ENCODE measurements at regions of chr12 and their contacts with region 1.

Region 1: DNA sequence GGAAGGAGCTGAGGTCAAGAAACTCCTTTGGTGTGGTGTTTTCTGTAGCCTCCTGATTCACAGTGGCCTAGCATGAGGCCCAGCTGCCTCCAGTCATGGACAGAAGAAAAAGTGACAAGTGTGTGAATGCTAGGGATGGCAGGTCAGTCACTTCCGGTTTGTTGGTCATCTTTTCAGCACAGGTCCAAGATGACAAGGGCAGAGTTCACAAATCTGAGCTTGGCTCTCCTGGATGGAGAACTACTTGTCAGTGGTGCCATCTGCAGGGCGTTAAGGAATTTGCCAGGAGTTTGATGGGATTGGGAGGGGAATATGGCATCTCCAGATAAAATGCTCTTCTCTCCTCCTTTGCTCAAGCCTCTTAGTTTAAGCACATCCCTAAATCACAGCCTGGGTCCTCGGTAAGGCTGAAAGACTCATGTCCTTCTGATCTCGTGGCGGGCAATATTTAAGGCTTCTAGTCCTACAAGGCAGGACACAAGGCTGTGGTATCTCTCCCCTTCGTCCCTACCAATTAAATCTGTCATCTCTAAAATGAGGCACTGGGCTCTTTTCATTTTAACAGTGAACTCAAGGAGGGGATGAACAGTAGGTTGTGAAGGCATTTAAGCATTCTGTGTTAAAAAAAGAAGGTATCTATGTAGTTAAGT is 10.0 kb downstream of the TUBA1B start:
- DNase-seq: no peak
- H3K4me3 ChIP-seq: no peak overlapping the region
- H3K27me3 ChIP-seq: no peaks in the 10 kb centered on the region
- CTCF ChIP-seq: peak; percentile 77

Region 2: GRCh38 chr12:48728807-48729206 is 392.4 kb before region 1 on chr12:
- CTCF ChIA-PET with region 1: no interaction called
- POLR2A ChIA-PET with region 1: no interaction called
- DNase-seq: no peak
- H3K4me3 ChIP-seq: no peak overlapping the region
- H3K27me3 ChIP-seq: no peaks in the 10 kb centered on the region
- CTCF ChIP-seq: no peak

Region 3: DNA sequence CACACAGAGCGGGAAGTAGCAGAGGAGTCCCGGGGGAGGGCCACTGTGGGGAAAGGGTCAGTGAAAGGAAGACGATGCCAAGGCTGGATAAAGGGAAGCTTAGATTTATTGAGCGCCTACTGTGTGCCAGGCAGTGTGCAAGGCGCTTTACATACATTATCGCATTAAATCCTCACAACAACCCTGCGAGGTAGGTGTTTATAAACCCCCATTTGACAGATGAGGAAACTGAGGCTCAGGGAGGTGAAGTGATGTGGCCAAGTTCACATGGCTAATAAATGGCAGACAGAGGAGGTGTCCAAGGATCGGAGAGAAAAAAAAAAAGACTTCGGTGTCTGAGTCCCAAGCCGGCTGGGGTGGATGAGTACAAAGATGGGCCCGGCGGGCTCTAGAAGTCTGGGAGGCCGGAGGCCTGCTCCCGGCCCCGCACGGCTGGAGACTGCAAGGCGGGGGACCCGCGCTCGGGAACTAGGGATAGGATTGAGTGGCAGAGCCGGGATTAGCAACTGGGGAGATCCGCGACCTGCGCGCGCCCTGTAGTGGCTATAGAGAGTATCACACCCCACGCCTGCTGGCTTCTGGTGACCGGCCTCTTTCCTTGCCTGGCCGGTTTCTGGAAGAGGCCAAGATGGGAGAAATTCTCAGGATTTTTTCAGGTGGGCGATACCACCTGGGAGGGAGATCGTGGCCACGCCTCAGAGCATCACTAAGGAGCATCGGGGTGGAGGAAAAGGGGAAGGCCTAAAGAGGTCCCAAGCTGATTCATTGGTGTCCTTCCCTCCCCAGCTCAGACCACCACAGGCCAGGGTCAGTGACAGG is 125.9 kb before region 1 on chr12:
- CTCF ChIA-PET with region 1: no interaction called
- POLR2A ChIA-PET with region 1: no interaction called
- DNase-seq: no peak
- H3K4me3 ChIP-seq: no peak overlapping the region
- H3K27me3 ChIP-seq: peaks cover 9% of the 10 kb centered on the region
- CTCF ChIP-seq: peak; percentile 83

Region 4: GRCh38 chr12:49088190-49088931 is 32.8 kb before region 1 on chr12:
- CTCF ChIA-PET with region 1: interaction called, 59 read pairs
- POLR2A ChIA-PET with region 1: no interaction called
- DNase-seq: peak; percentile 39
- H3K4me3 ChIP-seq: no peak overlapping the region
- H3K27me3 ChIP-seq: peaks cover 9% of the 10 kb centered on the region
- CTCF ChIP-seq: peak; percentile 93

Region 5: DNA sequence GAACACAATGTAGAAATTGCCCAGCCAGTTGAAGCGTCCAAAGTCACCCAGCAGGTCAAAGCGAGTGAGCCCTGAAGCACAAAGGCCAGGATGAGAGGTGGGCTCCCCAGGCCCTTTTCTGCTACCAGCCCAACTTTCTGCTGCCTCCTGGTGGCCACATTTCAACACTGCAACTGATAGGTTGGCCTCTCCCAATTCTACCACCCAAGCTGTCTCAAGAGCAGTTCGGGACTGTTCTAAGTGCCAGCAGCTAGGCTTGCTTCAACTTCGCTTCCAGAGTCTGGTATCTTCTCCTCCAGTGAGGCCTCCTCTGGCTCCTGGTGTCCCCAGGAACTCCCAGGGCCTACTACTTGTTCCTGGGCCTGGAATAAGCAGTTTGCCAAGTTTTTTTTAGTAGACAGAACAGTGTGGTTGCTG is 23.1 kb before region 1 on chr12:
- CTCF ChIA-PET with region 1: interaction called, 22 read pairs
- POLR2A ChIA-PET with region 1: no interaction called
- DNase-seq: no peak
- H3K4me3 ChIP-seq: no peak overlapping the region
- H3K27me3 ChIP-seq: peaks cover 8% of the 10 kb centered on the region
- CTCF ChIP-seq: peak; percentile 85

Region 6: GRCh38 chr12:49110464-49111155 is 10.6 kb before region 1 on chr12 and contains the start of gene LMBR1L:
- CTCF ChIA-PET with region 1: interaction called, 29 read pairs
- POLR2A ChIA-PET with region 1: interaction called, 4 read pairs
- DNase-seq: peak; percentile 95
- H3K4me3 ChIP-seq: peak within 1 kb of the TSS; percentile 79
- H3K27me3 ChIP-seq: no peaks in the 10 kb centered on the region
- CTCF ChIP-seq: peak; percentile 67
- polyA plus RNA-seq, gene LMBR1L: 37.2 and 63.1 TPM in 2 replicates

Region 7: GRCh38 chr12:49147384-49147783 is 26.2 kb after region 1 on chr12:
- CTCF ChIA-PET with region 1: no interaction called
- POLR2A ChIA-PET with region 1: interaction called, 18 read pairs
- DNase-seq: no peak
- H3K4me3 ChIP-seq: no peak overlapping the region
- H3K27me3 ChIP-seq: no peaks in the 10 kb centered on the region
- CTCF ChIP-seq: no peak